OCI-LY7 (cell line): ENCODE measurements at regions of chr17 and their contacts with region 1.

Region 1: DNA sequence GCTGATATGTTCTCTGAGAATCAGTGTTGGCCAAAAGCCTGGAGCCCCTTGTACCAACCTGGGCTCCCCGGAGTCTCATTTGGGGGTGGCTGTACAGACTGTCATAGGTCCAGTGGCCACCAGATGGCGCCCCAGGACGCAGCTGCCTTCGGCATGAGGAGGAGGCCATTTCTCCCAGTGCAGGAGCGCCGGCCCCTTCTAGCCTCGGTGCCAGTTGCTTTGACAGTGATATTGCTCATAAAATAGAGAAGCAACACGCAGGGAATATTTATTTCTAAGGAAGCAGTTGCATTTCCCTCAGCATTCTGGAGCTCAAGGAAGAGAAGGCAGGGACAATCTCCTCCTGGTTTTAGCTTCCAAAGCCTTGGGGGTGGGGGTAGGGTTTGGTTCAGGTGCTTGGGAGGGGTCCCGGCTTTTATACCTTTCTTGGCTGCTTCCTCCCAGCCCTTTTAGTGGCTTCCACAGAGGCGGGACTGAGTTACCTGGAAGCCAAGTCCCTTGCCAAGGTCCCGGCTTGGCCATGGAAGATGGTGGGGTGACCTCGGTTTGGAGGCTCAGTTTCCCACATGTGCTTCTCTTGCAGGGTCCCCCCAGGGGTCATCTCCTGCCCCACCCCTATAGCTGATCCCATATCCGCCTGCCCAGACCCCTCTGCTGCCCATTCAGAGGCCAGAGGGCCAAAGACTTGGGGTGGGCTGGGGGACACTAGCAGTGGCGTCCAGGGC is 117.8 kb upstream of the CDC42EP4 start:
- DNase-seq: peak; percentile 88
- H3K4me3 ChIP-seq: no peak overlapping the region
- H3K27ac ChIP-seq: no peak overlapping the region
- H3K4me1 ChIP-seq: no peaks in the 10 kb centered on the region
- CTCF ChIP-seq: peak; percentile 100

Region 2: DNA sequence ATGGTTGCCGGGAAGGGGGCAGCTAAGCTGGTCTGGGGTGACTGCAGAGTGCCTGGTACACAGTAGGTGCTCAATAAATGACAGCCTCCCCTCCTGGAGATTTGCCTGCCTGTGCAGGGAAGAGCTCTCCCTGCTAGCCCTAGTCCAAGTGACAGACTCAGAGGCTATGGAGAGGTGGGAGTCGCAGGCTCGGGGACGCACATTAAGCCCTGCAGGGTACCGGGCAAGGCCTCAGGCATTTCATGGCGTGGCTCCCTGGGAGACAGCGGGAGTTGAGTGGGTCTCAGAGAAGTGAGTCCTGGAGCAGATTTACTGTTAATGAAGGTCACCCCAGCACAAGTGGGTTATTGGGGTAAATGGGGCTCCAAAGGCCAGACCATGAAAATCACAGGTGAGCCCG is 14.4 kb after region 1 on chr17:
- CTCF ChIA-PET with region 1: no interaction called
- POLR2A ChIA-PET with region 1: no interaction called
- intact Hi-C with region 1: no loop called
- DNase-seq: no peak
- H3K4me3 ChIP-seq: no peak overlapping the region
- H3K27ac ChIP-seq: no peak overlapping the region
- H3K4me1 ChIP-seq: no peaks in the 10 kb centered on the region
- CTCF ChIP-seq: no peak

Region 3: DNA sequence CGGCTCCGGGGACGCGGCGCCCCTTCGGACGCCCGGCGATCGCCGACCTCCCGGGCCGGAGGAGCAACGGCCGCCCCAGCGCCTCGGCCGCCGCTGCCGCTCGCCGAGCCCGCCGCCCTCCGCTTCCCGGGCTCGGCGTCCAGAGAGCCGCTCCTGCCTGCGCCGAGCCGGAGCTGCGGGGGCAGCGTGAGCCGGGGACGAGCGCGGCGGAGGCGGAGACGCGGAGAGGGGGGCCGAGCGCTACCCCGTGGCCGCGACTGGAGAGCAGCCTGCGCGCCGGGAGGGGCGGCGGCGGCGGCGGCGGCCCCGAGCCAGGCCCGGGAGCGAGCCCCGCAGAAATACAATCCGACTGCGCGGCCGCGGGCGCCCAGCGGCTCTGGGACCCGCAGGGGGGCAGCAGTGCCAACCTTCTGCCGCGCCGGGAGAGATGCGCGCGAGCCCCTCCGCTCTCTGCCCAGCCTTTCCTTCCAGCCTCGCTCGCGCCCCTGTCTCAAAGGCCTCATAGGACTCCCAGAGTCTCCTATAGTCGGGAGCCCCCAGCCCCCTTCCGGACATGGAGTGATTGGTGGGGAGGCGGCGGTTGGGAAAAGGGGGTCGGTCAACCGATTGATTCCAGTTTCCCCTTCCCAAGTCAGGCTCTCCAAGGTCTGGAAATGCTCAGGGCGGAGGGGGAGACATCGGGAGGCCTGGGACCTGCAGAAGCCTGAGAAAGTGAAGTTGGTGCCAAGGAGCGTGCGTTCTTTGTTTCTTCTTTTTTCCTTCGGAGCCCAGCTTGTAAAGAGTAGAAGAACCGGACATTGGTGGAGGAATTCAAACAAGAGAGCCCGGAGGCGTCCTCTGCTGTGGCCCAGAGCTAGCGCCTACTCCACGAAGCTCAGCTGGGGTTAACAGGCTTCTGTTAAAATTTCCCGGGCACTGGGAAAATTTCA is 215.7 kb after region 1 on chr17:
- CTCF ChIA-PET with region 1: interaction called, 5 read pairs
- POLR2A ChIA-PET with region 1: no interaction called
- intact Hi-C with region 1: loop called (anchors 5 kb)
- DNase-seq: peak; percentile 50
- H3K4me3 ChIP-seq: peak overlapping the region; percentile 33
- H3K27ac ChIP-seq: no peak overlapping the region
- H3K4me1 ChIP-seq: peaks cover 6% of the 10 kb centered on the region
- CTCF ChIP-seq: peak; percentile 57

Region 4: GRCh38 chr17:73782641-73783381 is 353.2 kb after region 1 on chr17:
- CTCF ChIA-PET with region 1: interaction called, 3 read pairs
- POLR2A ChIA-PET with region 1: no interaction called
- intact Hi-C with region 1: loop called (anchors 1 kb)
- DNase-seq: peak; percentile 66
- H3K4me3 ChIP-seq: no peak overlapping the region
- H3K27ac ChIP-seq: no peak overlapping the region
- H3K4me1 ChIP-seq: no peaks in the 10 kb centered on the region
- CTCF ChIP-seq: peak; percentile 82

Region 5: DNA sequence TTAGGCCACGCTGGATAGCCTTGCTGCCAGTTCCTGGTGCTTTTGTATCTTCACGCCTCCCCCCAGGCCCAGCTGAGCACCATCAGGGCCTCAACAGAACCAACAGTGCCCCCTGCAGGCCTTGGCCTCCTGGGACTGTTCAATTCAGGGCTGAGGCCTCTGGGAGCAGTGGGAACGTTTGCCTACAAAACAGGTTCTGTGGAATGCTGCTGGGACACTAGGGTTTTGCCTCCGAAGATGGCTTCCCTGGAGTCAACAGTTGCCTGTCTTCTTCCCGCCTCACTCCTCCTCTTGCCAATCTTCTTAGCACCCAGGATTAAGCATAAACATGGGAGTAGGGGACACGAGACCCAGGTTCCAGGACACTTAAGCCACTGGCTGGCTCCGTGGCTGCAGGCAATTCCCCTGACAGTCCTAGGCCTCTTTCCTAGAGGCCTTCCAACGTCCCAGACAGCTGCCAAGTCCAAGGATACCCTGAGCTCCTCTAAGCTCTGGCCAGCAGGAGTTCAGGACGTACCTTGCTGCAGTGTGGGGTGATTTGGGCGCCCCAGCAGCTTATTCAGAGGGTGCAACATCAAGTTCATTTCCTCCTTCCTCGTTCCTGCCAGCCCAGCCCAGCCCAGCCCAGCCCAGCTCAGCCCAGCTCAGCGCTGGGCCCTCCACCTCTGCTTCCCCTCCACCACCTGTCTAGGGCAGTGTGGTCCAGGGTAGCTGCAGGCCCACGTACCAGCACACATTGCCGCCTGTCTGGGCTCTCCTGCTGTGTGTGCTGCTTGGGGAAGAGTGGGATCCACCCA is 527.3 kb after region 1 on chr17:
- CTCF ChIA-PET with region 1: no interaction called
- POLR2A ChIA-PET with region 1: no interaction called
- intact Hi-C with region 1: loop called (anchors 1 kb)
- DNase-seq: peak; percentile 68
- H3K4me3 ChIP-seq: no peak overlapping the region
- H3K27ac ChIP-seq: no peak overlapping the region
- H3K4me1 ChIP-seq: no peaks in the 10 kb centered on the region
- CTCF ChIP-seq: peak; percentile 90

Region 6: DNA sequence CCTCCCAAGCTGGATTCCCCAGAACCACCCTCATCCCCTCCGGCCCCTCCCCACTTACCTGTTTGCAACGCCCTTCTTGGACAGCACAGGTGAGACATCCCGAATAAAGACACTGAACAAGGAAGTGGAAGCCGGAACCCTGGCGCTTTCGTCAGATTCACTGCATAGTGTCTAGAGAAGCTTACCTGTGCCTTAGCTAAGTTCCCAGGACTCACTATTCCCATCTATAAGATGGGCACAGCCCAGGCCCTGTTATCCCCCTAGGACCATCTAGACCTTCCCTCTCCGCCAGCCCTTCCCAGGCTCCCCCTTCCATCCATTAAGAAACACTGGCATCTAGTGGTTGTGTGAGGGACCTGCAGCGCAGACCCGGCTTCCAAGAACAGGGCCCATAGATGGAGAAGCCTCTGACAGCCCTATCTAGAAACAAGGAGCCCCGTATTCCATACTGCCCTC is 747.0 kb after region 1 on chr17:
- CTCF ChIA-PET with region 1: no interaction called
- POLR2A ChIA-PET with region 1: no interaction called
- intact Hi-C with region 1: loop called (anchors 5 kb)
- DNase-seq: peak; percentile 63
- H3K4me3 ChIP-seq: no peak overlapping the region
- H3K27ac ChIP-seq: no peak overlapping the region
- H3K4me1 ChIP-seq: no peaks in the 10 kb centered on the region
- CTCF ChIP-seq: peak; percentile 98

Region 7: GRCh38 chr17:74815550-74816370 is 1386.2 kb after region 1 on chr17:
- CTCF ChIA-PET with region 1: no interaction called
- POLR2A ChIA-PET with region 1: no interaction called
- intact Hi-C with region 1: no loop called
- DNase-seq: peak; percentile 47
- H3K4me3 ChIP-seq: no peak overlapping the region
- H3K27ac ChIP-seq: no peak overlapping the region
- H3K4me1 ChIP-seq: peaks cover 8% of the 10 kb centered on the region
- CTCF ChIP-seq: peak; percentile 76